ENCODE measurements at regions of chr17 and their contacts with region 1.

Region 1: GRCh38 chr17:48878918-48879898 is 13.4 kb upstream of the ATP5MC1 start:
- DNase-seq: peak; percentile 87
- H3K4me3 ChIP-seq: no peak overlapping the region
- H3K27ac ChIP-seq: no peak overlapping the region
- H3K4me1 ChIP-seq: no peaks in the 10 kb centered on the region
- H3K27me3 ChIP-seq: peaks cover 26% of the 10 kb centered on the region; the same call in 1 of the 2 replicates
- CTCF ChIP-seq: peak; percentile 100
- EP300 ChIP-seq: no peak
- RAD21 ChIP-seq: peak; percentile 100

Region 2: GRCh38 chr17:48526608-48527546 is 352.3 kb before region 1 on chr17:
- CTCF ChIA-PET with region 1: no interaction called
- POLR2A ChIA-PET with region 1: no interaction called
- DNase-seq: peak; percentile 32
- H3K4me3 ChIP-seq: no peak overlapping the region
- H3K27ac ChIP-seq: no peak overlapping the region
- H3K4me1 ChIP-seq: no peaks in the 10 kb centered on the region
- H3K27me3 ChIP-seq: peaks cover 98% of the 10 kb centered on the region
- CTCF ChIP-seq: no peak
- EP300 ChIP-seq: no peak
- RAD21 ChIP-seq: no peak

Region 3: GRCh38 chr17:48663134-48663924 is 215.9 kb before region 1 on chr17:
- CTCF ChIA-PET with region 1: interaction called, 117 read pairs
- POLR2A ChIA-PET with region 1: no interaction called
- DNase-seq: no peak
- H3K4me3 ChIP-seq: no peak overlapping the region
- H3K27ac ChIP-seq: no peak overlapping the region
- H3K4me1 ChIP-seq: no peaks in the 10 kb centered on the region
- H3K27me3 ChIP-seq: peaks cover 88% of the 10 kb centered on the region
- CTCF ChIP-seq: peak; percentile 31; the same call in 1 of the 2 replicates
- EP300 ChIP-seq: no peak
- RAD21 ChIP-seq: no peak

Region 4: DNA sequence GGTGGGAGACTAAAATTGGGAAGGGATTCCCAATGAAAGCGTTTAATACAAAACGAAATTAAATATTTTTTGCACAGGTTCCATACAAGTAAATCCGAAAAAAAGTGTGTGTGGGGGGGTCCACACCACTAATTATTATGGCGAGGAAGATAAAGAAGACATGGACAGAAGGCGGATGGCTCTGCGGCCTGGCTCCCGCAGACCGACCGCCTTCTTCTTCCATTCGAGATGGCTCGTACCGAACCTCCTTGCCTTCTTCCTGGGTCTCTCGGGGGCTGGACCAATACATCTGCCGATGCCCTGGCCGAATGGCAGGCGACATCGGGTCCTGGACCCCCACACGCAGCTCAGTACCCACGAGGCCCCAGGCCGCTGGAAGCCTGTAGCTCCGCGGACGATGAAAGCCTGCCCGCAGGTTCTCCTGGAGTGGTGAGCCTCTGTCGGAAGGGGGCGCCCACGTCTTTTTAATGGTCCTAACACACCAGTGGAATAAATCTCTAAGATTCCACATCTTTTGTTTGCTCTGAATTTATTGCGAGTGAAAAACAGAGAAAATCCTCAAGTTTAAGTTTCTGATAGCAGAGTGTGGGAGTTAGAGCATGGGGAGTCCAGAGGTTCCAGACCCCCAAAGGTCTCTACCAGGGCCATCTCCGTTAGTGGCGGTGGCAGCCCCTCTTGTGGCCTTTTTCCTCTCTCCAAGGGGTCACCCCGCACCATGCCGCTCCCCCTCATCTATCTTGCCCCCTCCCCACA is 154.8 kb before region 1 on chr17:
- CTCF ChIA-PET with region 1: interaction called, 328 read pairs
- POLR2A ChIA-PET with region 1: interaction called, 4 read pairs
- DNase-seq: peak; percentile 83
- H3K4me3 ChIP-seq: peak overlapping the region; percentile 21 to 42; a peak in 3 of 4 replicates
- H3K27ac ChIP-seq: no peak overlapping the region
- H3K4me1 ChIP-seq: no peaks in the 10 kb centered on the region
- H3K27me3 ChIP-seq: peaks cover 100% of the 10 kb centered on the region
- CTCF ChIP-seq: peak; percentile 97
- EP300 ChIP-seq: no peak
- RAD21 ChIP-seq: peak; percentile 82

Region 5: DNA sequence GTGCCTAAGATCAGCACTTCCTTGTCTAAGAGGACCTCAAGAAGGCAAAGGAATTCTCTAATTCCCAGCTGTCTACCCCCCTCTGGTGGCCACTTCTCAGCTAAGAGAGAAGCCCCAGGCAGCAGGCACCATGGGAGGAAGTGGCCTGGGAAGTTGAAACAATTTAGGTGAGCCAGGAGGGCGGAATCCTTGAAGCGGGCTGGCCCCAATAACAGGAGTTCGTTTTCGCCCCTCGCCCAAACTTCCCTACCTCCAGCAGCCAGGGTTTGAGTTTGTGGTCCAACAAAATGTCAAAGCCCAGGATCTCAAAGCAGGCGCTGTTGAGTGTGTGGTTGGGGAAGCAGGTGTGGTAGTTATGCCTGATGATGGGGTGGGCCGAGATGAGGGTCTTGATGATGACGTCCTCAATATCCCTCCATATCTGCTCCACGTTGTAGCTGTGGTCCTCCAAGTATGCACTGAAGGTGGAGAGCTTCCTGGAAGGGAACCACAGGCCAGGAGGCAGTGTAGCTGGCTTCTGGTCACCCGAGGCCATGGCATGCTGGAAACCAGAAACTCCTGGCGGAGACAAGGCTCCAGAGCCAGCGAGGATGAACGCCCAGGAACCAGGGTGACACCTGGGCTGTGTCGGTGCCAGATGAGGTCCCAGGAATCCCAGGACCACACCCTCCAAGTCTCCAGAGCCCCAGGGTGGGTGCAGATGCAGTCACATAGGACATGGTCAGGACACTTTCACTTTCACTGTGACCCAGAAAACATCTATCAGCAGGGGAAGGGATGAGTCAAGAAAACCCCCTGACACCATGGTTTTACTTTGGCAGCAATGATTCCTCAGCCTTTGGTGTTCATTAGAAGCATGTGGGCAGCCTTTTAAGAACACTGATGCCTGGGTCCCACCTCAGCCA is 87.8 kb before region 1 on chr17:
- CTCF ChIA-PET with region 1: interaction called, 59 read pairs
- POLR2A ChIA-PET with region 1: no interaction called
- DNase-seq: peak; percentile 53
- H3K4me3 ChIP-seq: no peak overlapping the region; a peak in 1 of 4 replicates
- H3K27ac ChIP-seq: no peak overlapping the region
- H3K4me1 ChIP-seq: peaks cover 0 to 3% of the 10 kb centered on the region in 2 experiments; a peak in 1 of 4 replicates
- H3K27me3 ChIP-seq: peaks cover 44% of the 10 kb centered on the region
- CTCF ChIP-seq: peak; percentile 96
- EP300 ChIP-seq: no peak
- RAD21 ChIP-seq: peak; percentile 59

Region 6: GRCh38 chr17:48841395-48841831 is 37.8 kb before region 1 on chr17:
- CTCF ChIA-PET with region 1: interaction called, 54 read pairs
- POLR2A ChIA-PET with region 1: interaction called, 3 read pairs
- DNase-seq: no peak
- H3K4me3 ChIP-seq: peak overlapping the region; percentile 3 to 41; a peak in 3 of 4 replicates
- H3K27ac ChIP-seq: peak overlapping the region in 1 of 2 experiments; percentile 64; a peak in 2 of 4 replicates
- H3K4me1 ChIP-seq: peaks cover 0 to 12% of the 10 kb centered on the region in 2 experiments; a peak in 1 of 4 replicates
- H3K27me3 ChIP-seq: no peaks in the 10 kb centered on the region
- CTCF ChIP-seq: no peak
- EP300 ChIP-seq: no peak
- RAD21 ChIP-seq: no peak

Region 7: DNA sequence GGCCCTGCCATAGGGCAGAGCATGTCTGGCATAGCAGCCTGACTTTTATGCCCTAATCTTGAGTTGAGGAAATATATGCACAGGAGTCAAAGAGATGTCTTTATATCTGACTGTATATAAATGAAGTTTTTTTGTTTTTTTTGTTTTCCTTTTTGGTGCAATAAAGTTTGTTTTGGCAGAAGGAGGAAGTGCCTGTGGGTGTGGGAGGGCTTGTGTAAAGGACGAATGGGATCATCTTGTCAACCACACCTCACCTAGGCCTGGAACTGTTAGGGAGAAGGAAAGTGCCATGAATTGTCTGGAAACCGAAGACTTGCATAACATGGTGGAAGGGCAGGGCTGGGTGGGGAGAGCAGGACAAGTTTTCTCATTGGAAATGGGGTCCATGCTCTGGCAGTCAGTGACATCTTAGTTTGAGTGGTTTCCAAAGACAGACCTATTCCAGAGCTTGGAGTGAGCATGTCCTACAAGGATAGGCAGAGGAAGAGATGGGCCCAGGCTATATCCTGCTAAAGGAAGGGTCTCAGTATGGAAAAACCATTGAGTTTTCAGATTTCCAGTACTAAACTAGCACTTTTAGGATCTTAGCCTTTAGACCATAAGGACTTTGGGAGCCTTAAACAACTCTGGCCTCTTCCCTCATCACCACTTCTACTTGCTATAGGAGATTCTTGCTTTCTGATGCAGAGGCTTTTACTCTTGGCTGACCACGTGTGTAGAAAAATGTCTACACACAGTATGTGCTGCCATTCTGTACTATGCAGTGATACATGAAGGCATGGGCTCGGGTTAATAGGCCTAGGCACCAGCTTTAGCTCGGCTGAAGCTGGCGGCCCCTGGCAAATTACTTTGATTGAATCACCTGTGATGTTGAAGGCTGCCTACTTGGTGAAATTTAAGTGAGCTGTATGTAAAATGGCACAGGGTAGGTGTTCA is 49.9 kb after region 1 on chr17:
- CTCF ChIA-PET with region 1: interaction called, 11 read pairs
- POLR2A ChIA-PET with region 1: no interaction called
- DNase-seq: no peak
- H3K4me3 ChIP-seq: no peak overlapping the region
- H3K27ac ChIP-seq: peak overlapping the region in 1 of 2 experiments; percentile 3; a peak in 1 of 4 replicates
- H3K4me1 ChIP-seq: no peaks in the 10 kb centered on the region
- H3K27me3 ChIP-seq: no peaks in the 10 kb centered on the region
- CTCF ChIP-seq: no peak
- EP300 ChIP-seq: no peak
- RAD21 ChIP-seq: no peak

Region 8: DNA sequence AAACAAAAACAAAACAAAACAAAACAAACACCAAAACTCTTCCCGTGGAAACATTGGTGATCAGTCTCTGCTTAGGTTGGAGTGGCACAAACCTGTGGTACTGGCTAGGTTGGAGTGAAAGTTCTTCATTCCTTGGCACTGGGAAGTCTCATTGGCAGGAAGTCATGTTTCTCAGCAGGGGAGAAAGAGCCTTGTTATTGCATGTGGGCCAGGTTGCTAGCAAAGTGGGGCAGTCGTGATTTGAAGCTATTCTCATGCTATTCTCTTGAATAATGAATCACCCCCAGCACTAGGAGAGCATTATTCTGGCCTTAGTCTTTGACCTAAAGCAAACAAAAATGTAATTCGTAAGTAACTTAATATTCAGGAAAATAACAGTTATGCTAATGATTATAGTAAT is 229.1 kb after region 1 on chr17:
- CTCF ChIA-PET with region 1: no interaction called
- POLR2A ChIA-PET with region 1: no interaction called
- DNase-seq: no peak
- H3K4me3 ChIP-seq: no peak overlapping the region
- H3K27ac ChIP-seq: peak overlapping the region in 1 of 2 experiments; percentile 71; a peak in 2 of 4 replicates
- H3K4me1 ChIP-seq: peaks cover 0 to 16% of the 10 kb centered on the region in 2 experiments; a peak in 2 of 4 replicates
- H3K27me3 ChIP-seq: peaks cover 13% of the 10 kb centered on the region; the same call in 1 of the 2 replicates
- CTCF ChIP-seq: no peak
- EP300 ChIP-seq: no peak
- RAD21 ChIP-seq: no peak